CD8-positive, alpha-beta T cell (primary cell): ENCODE measurements at regions of chr20 and their contacts with region 1.

Region 1: GRCh38 chr20:62010551-62011402 is 54.9 kb downstream of the TAF4 start:
- DNase-seq: peak; percentile 35 to 79 (median 68)
- ATAC-seq: peak; percentile 86
- H3K4me3 ChIP-seq: no peak overlapping the region
- H3K4me3 Mint-ChIP-seq: no peak overlapping the region
- H3K27ac ChIP-seq: no peak overlapping the region
- H3K27ac Mint-ChIP-seq: no peak overlapping the region
- H3K4me1 ChIP-seq: no peaks in the 10 kb centered on the region
- H3K4me1 Mint-ChIP-seq: peaks cover 9% of the 10 kb centered on the region
- H3K27me3 ChIP-seq: no peaks in the 10 kb centered on the region
- H3K27me3 Mint-ChIP-seq: no peaks in the 10 kb centered on the region
- CTCF ChIP-seq: peak; percentile 89

Region 2: GRCh38 chr20:62048821-62049685 is 38.3 kb after region 1 on chr20:
- CTCF ChIA-PET with region 1: no interaction called
- POLR2A ChIA-PET with region 1: no interaction called
- intact Hi-C with region 1: no loop called
- DNase-seq: no peak
- ATAC-seq: no peak
- H3K4me3 ChIP-seq: no peak overlapping the region
- H3K4me3 Mint-ChIP-seq: no peak overlapping the region
- H3K27ac ChIP-seq: no peak overlapping the region
- H3K27ac Mint-ChIP-seq: no peak overlapping the region
- H3K4me1 ChIP-seq: peaks cover 4% of the 10 kb centered on the region
- H3K4me1 Mint-ChIP-seq: peaks cover 65% of the 10 kb centered on the region
- H3K27me3 ChIP-seq: no peaks in the 10 kb centered on the region
- H3K27me3 Mint-ChIP-seq: no peaks in the 10 kb centered on the region
- CTCF ChIP-seq: no peak

Region 3: DNA sequence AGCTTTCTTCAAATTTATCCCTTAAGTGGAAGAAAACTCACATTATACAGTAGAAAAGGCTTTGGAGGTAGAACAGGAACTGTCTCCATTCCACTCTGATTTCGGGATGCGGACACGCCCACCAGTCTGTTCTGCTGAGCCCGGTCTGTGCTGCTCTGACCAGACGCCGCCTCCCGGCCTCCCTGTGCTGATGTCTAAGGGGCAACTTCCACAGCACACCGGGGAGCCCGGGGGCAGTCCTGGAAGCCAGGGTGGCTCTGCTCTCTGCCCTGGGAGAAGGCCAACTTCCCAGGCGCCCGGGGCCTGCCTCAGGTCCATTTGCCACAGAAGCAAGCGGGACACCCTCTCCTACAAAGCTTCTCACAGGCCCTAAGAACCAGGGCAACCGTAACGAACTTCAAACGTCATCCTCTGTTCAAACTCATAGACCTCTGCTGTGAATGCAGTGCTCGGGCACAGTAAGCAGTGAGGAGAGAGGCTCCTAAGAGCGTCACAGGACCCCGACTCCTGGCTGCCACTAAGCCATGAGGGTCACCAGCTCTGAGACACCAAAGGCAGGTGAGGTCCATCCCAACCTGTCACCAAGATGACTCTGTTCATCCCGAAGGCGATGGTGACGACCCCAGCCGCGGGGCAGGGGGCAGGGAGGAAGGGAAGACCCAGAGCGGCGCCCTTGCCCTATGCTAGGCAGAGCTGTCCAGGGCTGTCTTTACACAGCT is 49.3 kb after region 1 on chr20:
- CTCF ChIA-PET with region 1: interaction called, 10 read pairs
- POLR2A ChIA-PET with region 1: no interaction called
- intact Hi-C with region 1: loop called in 1 of 2 experiments (anchors 5 kb)
- DNase-seq: no peak
- ATAC-seq: no peak
- H3K4me3 ChIP-seq: no peak overlapping the region
- H3K4me3 Mint-ChIP-seq: no peak overlapping the region
- H3K27ac ChIP-seq: no peak overlapping the region
- H3K27ac Mint-ChIP-seq: peak overlapping the region; percentile 39
- H3K4me1 ChIP-seq: peaks cover 49% of the 10 kb centered on the region
- H3K4me1 Mint-ChIP-seq: peaks cover 69% of the 10 kb centered on the region
- H3K27me3 ChIP-seq: no peaks in the 10 kb centered on the region
- H3K27me3 Mint-ChIP-seq: no peaks in the 10 kb centered on the region
- CTCF ChIP-seq: no peak

Region 4: DNA sequence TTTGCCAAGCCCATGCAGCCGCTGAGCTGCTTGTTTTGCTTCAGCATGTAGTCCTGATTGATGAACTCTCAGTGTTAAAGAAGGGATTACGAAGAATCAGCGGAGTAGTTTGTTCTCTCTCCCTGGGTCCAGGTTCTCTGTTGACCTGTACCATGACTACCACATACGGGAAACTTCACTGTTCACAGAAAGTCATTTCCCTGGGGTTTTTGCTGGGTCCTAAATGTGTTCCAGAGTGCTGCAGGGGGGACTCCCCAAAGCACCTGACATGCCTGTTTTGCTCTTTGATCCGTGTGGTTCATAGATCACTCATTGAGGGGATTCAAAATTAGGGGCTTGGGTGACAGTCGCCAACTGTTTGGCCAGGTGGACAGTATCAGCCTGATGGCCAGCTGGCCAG is 117.0 kb after region 1 on chr20:
- CTCF ChIA-PET with region 1: interaction called, 82 read pairs
- POLR2A ChIA-PET with region 1: no interaction called
- intact Hi-C with region 1: no loop called
- DNase-seq: no peak
- ATAC-seq: no peak
- H3K4me3 ChIP-seq: no peak overlapping the region
- H3K4me3 Mint-ChIP-seq: no peak overlapping the region
- H3K27ac ChIP-seq: no peak overlapping the region
- H3K27ac Mint-ChIP-seq: no peak overlapping the region
- H3K4me1 ChIP-seq: peaks cover 23% of the 10 kb centered on the region
- H3K4me1 Mint-ChIP-seq: peaks cover 51% of the 10 kb centered on the region
- H3K27me3 ChIP-seq: no peaks in the 10 kb centered on the region
- H3K27me3 Mint-ChIP-seq: no peaks in the 10 kb centered on the region
- CTCF ChIP-seq: no peak

Region 5: DNA sequence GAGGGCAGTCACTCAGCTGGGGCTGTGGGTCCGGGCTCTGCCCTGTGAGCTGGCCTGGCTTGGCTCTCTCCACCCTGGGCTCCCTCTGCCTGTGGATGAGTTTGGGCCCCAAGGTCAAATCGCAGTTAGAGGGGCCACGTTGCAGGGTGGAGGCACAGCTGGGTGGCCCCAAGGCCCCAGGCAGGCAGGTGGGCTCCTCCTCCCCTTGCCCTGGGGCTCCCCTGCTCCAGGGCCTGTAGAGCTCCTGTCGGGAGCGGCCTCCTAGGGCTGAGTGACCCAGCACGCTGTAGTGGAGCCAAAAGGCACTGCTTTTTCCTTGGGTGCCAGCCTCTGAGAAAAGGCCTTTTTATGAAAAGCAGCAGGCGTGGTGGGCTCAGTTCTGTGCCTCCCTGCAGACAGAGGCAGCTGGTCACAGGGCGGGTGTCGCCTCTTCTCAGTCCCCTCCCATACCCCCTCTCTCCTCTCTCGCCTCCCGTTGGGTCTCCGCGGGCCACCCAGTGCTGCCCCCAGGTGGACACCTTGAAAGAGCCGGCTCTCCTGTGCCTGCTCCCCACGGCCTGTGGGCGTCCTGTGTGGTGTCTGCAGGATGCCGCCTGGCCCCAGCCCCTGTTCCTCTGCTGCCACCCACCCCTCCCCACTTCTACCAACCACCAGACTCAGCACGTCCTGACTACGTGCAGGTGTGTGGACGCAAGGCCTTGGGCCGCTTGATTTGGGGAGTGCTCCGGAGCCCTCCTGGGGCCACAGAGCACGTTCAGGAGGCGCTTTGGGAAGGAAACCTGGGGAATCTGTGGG is 146.0 kb after region 1 on chr20:
- CTCF ChIA-PET with region 1: interaction called, 14 read pairs
- POLR2A ChIA-PET with region 1: no interaction called
- intact Hi-C with region 1: loop called in 1 of 2 experiments (anchors 1 kb)
- DNase-seq: peak; percentile 53 to 79 (median 77)
- ATAC-seq: peak; percentile 96
- H3K4me3 ChIP-seq: no peak overlapping the region
- H3K4me3 Mint-ChIP-seq: no peak overlapping the region
- H3K27ac ChIP-seq: no peak overlapping the region
- H3K27ac Mint-ChIP-seq: no peak overlapping the region
- H3K4me1 ChIP-seq: peaks cover 9% of the 10 kb centered on the region
- H3K4me1 Mint-ChIP-seq: peaks cover 10% of the 10 kb centered on the region
- H3K27me3 ChIP-seq: no peaks in the 10 kb centered on the region
- H3K27me3 Mint-ChIP-seq: no peaks in the 10 kb centered on the region
- CTCF ChIP-seq: peak; percentile 59